CD4-positive, alpha-beta T cell (primary cell): ENCODE measurements at regions of chr18 and their contacts with region 1.

Region 1: DNA sequence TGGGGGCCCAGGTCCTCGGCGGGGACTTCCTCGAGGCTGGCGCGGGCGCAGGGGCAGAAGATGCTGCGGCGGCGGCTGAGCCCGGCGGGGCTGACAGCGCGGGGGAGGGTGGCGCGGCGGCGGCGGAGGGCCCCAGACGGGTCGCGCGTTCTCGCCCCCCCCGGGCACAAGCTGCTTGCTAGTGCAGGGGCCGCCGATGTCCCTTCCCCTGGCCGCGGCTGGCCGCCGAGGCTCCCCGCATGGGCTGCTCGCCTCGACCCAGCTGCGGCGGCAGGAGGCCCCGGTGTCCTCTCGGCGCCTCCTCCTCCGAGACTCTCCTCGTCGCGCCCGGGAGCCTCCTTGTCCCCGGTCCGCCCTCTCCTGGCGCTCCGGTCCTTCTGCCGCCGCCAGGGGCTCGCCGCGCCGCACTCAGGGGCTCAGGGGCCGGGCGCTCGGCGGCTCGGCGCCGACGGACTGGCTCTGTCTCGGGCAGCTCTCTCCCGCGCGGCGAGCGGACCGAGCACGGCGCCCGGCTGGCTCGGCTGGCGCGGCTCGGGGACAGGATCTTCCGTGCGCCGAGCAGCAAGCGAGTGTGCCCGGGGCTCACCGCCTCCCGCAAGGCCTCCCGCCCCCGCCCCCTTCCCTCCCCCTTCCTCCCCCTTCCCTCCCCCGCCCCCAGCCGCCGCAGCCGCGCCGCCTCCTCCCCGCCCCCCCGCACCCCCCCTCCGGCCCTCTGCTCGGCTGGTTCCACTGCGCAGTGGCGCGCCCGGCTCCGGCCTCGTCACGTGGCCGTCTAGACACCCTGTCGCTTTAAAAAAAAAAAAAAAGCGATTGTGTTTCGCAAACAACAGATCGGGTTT is 902 bp upstream of the SMAD7 start:
- DNase-seq: peak; percentile 59 to 95 (median 79)
- ATAC-seq: peak; percentile 30
- H3K4me3 ChIP-seq: peak overlapping the region; percentile 91
- H3K4me3 Mint-ChIP-seq: peak overlapping the region; percentile 99
- H3K27ac ChIP-seq: peak overlapping the region; percentile 88 to 93
- H3K27ac Mint-ChIP-seq: peak overlapping the region; percentile 99
- H3K4me1 ChIP-seq: peaks cover 63% of the 10 kb centered on the region
- H3K4me1 Mint-ChIP-seq: peaks cover 57% of the 10 kb centered on the region
- H3K27me3 ChIP-seq: no peaks in the 10 kb centered on the region
- H3K27me3 Mint-ChIP-seq: no peaks in the 10 kb centered on the region
- CTCF ChIP-seq: no peak

Region 2: DNA sequence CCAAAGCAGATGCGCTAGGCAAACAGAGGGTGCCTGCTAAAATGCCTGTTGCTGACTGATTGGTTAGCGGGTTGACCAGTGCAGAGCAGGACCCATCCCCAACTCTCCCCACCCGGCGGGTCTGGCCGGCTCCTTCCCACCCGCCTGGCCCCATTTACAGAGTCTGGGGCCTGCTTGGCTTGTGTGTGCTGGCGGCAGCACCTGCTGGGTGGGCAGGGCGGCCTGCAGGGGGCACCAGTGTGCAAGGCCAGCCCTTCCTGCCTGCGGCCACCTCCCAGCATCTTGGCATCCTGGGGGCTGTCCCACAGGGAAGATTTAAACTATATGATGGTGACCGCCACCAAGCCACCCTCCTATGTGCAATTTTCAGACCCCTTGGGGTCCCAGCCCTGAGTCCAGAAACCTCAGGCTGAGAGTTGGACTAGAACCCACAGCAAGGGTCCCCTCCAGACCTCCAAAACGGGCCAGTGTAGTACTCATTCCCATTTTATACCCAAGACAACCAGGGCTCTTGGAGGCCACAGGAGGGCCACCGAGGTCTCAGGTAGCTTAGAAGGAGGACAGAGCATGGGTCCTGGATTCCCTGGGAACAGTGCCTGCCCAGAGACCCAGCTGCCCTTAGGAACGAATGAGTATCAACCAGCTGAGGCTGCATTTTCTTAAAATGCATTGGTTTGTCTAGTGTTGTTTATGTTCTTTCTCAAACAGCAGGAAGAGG is 174.5 kb before region 1 on chr18:
- CTCF ChIA-PET with region 1: interaction called, 3 read pairs
- POLR2A ChIA-PET with region 1: interaction called, 3 read pairs
- intact Hi-C with region 1: loop called in 1 of 2 experiments (anchors 10 kb)
- DNase-seq: peak; percentile 49 to 86 (median 66)
- ATAC-seq: peak; percentile 91
- H3K4me3 ChIP-seq: no peak overlapping the region
- H3K4me3 Mint-ChIP-seq: no peak overlapping the region
- H3K27ac ChIP-seq: no peak overlapping the region
- H3K27ac Mint-ChIP-seq: no peak overlapping the region
- H3K4me1 ChIP-seq: peaks cover 18% of the 10 kb centered on the region
- H3K4me1 Mint-ChIP-seq: peaks cover 6% of the 10 kb centered on the region
- H3K27me3 ChIP-seq: no peaks in the 10 kb centered on the region
- H3K27me3 Mint-ChIP-seq: no peaks in the 10 kb centered on the region
- CTCF ChIP-seq: peak; percentile 91

Region 3: GRCh38 chr18:48913201-48913600 is 38.5 kb before region 1 on chr18:
- CTCF ChIA-PET with region 1: interaction called, 12 read pairs
- POLR2A ChIA-PET with region 1: no interaction called
- intact Hi-C with region 1: loop called (anchors 5 kb)
- DNase-seq: peak; percentile 45 to 81 (median 54)
- ATAC-seq: peak; percentile 77
- H3K4me3 ChIP-seq: no peak overlapping the region
- H3K4me3 Mint-ChIP-seq: no peak overlapping the region
- H3K27ac ChIP-seq: no peak overlapping the region
- H3K27ac Mint-ChIP-seq: no peak overlapping the region
- H3K4me1 ChIP-seq: peaks cover 27% of the 10 kb centered on the region
- H3K4me1 Mint-ChIP-seq: peaks cover 49% of the 10 kb centered on the region
- H3K27me3 ChIP-seq: no peaks in the 10 kb centered on the region
- H3K27me3 Mint-ChIP-seq: no peaks in the 10 kb centered on the region
- CTCF ChIP-seq: peak; percentile 57

Region 4: GRCh38 chr18:48928787-48929186 is 22.9 kb before region 1 on chr18:
- CTCF ChIA-PET with region 1: interaction called, 4 read pairs
- POLR2A ChIA-PET with region 1: interaction called, 17 read pairs
- intact Hi-C with region 1: loop called (anchors 2 kb)
- DNase-seq: peak; percentile 54 to 93 (median 80)
- ATAC-seq: peak; percentile 89
- H3K4me3 ChIP-seq: peak overlapping the region; percentile 31
- H3K4me3 Mint-ChIP-seq: peak overlapping the region; percentile 86
- H3K27ac ChIP-seq: peak overlapping the region in 1 of 2 donors; percentile 24
- H3K27ac Mint-ChIP-seq: peak overlapping the region; percentile 84
- H3K4me1 ChIP-seq: peaks cover 94% of the 10 kb centered on the region
- H3K4me1 Mint-ChIP-seq: peaks cover 97% of the 10 kb centered on the region
- H3K27me3 ChIP-seq: no peaks in the 10 kb centered on the region
- H3K27me3 Mint-ChIP-seq: no peaks in the 10 kb centered on the region
- CTCF ChIP-seq: no peak

Region 5: GRCh38 chr18:48940854-48941611 is 10.6 kb before region 1 on chr18:
- CTCF ChIA-PET with region 1: interaction called, 18 read pairs
- POLR2A ChIA-PET with region 1: interaction called, 50 read pairs
- intact Hi-C with region 1: loop called in 1 of 2 experiments (anchors 1 kb)
- DNase-seq: peak; percentile 71 to 97 (median 80)
- ATAC-seq: peak; percentile 83
- H3K4me3 ChIP-seq: peak overlapping the region; percentile 26
- H3K4me3 Mint-ChIP-seq: peak overlapping the region; percentile 87
- H3K27ac ChIP-seq: peak overlapping the region; percentile 51
- H3K27ac Mint-ChIP-seq: peak overlapping the region; percentile 92
- H3K4me1 ChIP-seq: peaks cover 93% of the 10 kb centered on the region
- H3K4me1 Mint-ChIP-seq: peaks cover 92% of the 10 kb centered on the region
- H3K27me3 ChIP-seq: no peaks in the 10 kb centered on the region
- H3K27me3 Mint-ChIP-seq: no peaks in the 10 kb centered on the region
- CTCF ChIP-seq: no peak

Region 6: DNA sequence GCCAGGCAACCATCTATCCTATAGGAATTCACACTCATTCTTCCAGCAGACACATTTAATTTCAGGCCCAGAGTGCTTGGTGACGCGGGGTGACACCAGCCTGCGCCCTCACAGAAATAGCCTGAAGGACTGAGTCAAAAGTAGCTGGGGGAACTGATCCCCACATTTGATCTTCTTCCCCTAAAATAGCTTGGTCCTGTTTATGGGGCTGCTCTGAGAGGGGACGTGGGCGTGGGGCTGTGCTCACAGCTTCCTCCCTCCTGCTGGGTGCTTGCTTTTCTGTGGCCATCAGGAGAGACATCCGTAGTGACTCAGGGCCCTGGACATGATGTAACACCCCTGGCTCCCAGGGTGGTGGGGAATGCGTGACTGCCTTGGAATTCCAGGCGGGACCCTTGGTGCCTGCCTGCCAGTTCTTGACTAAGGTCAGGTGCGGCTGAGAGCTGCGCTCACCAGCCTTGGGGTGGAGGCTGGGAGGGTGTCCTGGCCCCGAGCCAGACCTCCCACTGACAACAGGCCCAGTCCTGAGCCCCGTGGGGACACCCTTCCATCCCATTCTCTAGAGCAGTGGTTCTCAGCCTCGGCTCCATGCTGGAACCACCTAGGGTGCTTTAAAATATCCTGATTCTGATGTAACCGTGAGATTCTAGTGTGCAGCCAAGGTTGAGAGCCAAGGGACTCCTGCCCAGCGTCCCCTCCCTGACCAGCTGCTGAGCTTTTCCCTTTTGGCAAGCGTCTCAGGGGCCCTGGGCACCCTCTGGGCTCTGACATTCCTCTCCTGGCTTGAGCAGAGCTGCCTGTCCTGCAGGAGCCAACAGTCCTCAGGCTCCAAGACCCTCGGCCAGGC is 46.5 kb after region 1 on chr18:
- CTCF ChIA-PET with region 1: interaction called, 5 read pairs
- POLR2A ChIA-PET with region 1: interaction called, 12 read pairs
- intact Hi-C with region 1: loop called in 1 of 2 experiments (anchors 5 kb)
- DNase-seq: peak in 2 of 14 experiments; percentile 44 to 60
- ATAC-seq: no peak
- H3K4me3 ChIP-seq: no peak overlapping the region
- H3K4me3 Mint-ChIP-seq: peak overlapping the region; percentile 1
- H3K27ac ChIP-seq: no peak overlapping the region
- H3K27ac Mint-ChIP-seq: peak overlapping the region; percentile 85
- H3K4me1 ChIP-seq: peaks cover 27% of the 10 kb centered on the region
- H3K4me1 Mint-ChIP-seq: peaks cover 21% of the 10 kb centered on the region
- H3K27me3 ChIP-seq: no peaks in the 10 kb centered on the region
- H3K27me3 Mint-ChIP-seq: no peaks in the 10 kb centered on the region
- CTCF ChIP-seq: no peak

Region 7: DNA sequence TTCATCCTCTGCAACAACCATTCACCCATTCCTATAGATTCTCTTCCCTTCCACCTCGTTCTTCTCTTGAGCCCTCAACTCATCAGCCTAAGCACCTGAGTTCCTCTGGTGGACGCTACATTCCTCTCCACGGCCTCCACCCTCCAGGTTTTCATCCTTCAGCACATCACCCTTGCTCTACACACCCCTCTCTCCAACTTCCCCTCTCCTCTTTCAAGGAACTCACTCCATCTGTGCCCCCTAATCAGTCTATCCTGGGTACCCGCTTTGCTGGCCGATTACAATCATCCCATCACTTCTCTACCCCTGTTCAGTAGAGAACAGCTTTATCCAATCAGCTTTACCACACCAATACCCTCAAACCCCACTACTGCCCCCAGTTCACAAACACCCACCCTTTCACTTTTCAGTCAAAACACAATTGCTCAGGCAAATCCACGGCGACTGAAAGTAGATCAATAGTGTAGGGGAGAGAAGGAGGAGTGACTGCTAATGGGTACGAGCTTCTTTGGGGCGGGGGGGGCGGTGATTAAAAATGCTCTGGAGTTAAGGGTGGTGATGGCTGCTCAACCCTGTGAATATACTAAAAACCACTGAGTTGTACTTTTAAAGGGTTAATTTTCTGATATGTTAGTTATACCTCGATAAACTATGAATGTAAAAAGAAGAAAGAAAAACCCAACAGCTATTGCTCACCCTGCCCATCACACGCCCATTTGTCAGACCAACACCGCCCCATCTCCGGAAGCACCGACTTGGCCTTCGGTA is 507.9 kb after region 1 on chr18:
- CTCF ChIA-PET with region 1: no interaction called
- POLR2A ChIA-PET with region 1: no interaction called
- intact Hi-C with region 1: loop called in 1 of 2 experiments (anchors 10 kb)
- DNase-seq: peak in 9 of 14 experiments; percentile 4 to 63 (median 13)
- ATAC-seq: peak; percentile 9
- H3K4me3 ChIP-seq: peak overlapping the region; percentile 76
- H3K4me3 Mint-ChIP-seq: peak overlapping the region; percentile 95
- H3K27ac ChIP-seq: peak overlapping the region in 1 of 2 donors; percentile 54
- H3K27ac Mint-ChIP-seq: peak overlapping the region; percentile 87
- H3K4me1 ChIP-seq: peaks cover 23% of the 10 kb centered on the region
- H3K4me1 Mint-ChIP-seq: peaks cover 58% of the 10 kb centered on the region
- H3K27me3 ChIP-seq: no peaks in the 10 kb centered on the region
- H3K27me3 Mint-ChIP-seq: no peaks in the 10 kb centered on the region
- CTCF ChIP-seq: no peak